ENCODE measurements at regions of chr19 and their contacts with region 1.

Region 1: GRCh38 chr19:40221858-40222837 is 4.0 kb upstream of the TTC9B start:
- DNase-seq: peak; percentile 96
- H3K4me3 ChIP-seq: no peak overlapping the region
- H3K27ac ChIP-seq: no peak overlapping the region
- H3K4me1 ChIP-seq: peaks cover 17 to 42% (median 39%) of the 10 kb centered on the region in 4 donors
- H3K27me3 ChIP-seq: peaks cover 8 to 95% (median 62%) of the 10 kb centered on the region in 4 donors
- CTCF ChIP-seq: peak; percentile 93 to 97 (median 94)
- EP300 ChIP-seq: no peak
- POLR2A ChIP-seq: no peak

Region 2: GRCh38 chr19:40139533-40140287 is 82.4 kb before region 1 on chr19:
- intact Hi-C with region 1: loop called (anchors 1 kb)
- DNase-seq: peak; percentile 80
- H3K4me3 ChIP-seq: no peak overlapping the region
- H3K27ac ChIP-seq: no peak overlapping the region
- H3K4me1 ChIP-seq: peaks cover 0 to 5% (median 0%) of the 10 kb centered on the region in 4 donors
- H3K27me3 ChIP-seq: peaks cover 0 to 37% (median 0%) of the 10 kb centered on the region in 4 donors
- CTCF ChIP-seq: peak; percentile 59 to 74 (median 69)
- EP300 ChIP-seq: no peak
- POLR2A ChIP-seq: no peak

Measured in esophagus muscularis mucosa (tissue), 4 donors.